GM12878 (cell line): ENCODE measurements at regions of chr9 and their contacts with region 1.

Region 1: DNA sequence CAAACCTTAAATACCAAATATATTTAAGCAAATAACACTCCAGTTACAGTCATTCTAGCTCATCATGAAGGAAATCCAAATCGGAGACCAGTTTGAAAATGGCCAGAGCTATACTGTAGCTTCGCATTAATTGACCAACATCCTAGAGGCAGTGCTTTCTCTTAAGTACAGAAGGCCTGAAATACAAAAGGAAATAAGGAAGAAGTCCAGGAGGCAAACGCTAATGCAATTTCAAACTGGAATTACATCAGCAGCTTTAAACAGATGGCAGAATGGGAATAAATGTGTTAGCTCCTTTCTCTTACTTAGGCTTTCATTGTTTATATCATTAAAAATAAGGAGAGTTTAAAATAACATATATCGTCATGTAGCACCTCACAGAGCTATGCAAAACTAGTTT is 197.0 kb downstream of the SEC61B start:
- DNase-seq: no peak
- ATAC-seq: no peak
- H3K4me3 ChIP-seq: no peak overlapping the region
- H3K27ac ChIP-seq: no peak overlapping the region
- H3K4me1 ChIP-seq: peaks cover 4% of the 10 kb centered on the region
- H3K27me3 ChIP-seq: no peaks in the 10 kb centered on the region
- CTCF ChIP-seq: no peak
- EP300 ChIP-seq: no peak
- POLR2A ChIP-seq: no peak
- RAD21 ChIP-seq: no peak

Region 2: GRCh38 chr9:99433555-99433954 is 14.5 kb after region 1 on chr9:
- CTCF ChIA-PET with region 1: interaction called, 4 read pairs
- POLR2A ChIA-PET with region 1: no interaction called
- RAD21 ChIA-PET with region 1: no interaction called
- SMC1A ChIA-PET with region 1: interaction called, 10 read pairs
- in situ Hi-C with region 1: no loop called
- intact Hi-C with region 1: no loop called
- DNase-seq: peak; percentile 49
- ATAC-seq: peak; percentile 100
- H3K4me3 ChIP-seq: no peak overlapping the region
- H3K27ac ChIP-seq: peak overlapping the region; percentile 35
- H3K4me1 ChIP-seq: peaks cover 14% of the 10 kb centered on the region
- H3K27me3 ChIP-seq: no peaks in the 10 kb centered on the region
- CTCF ChIP-seq: no peak
- EP300 ChIP-seq: peak; percentile 54 to 87; a peak in 2 of 4 replicates
- POLR2A ChIP-seq: peak; percentile 47; the same call in 1 of the 2 replicates
- RAD21 ChIP-seq: peak; percentile 2; the same call in 1 of the 2 replicates

Region 3: DNA sequence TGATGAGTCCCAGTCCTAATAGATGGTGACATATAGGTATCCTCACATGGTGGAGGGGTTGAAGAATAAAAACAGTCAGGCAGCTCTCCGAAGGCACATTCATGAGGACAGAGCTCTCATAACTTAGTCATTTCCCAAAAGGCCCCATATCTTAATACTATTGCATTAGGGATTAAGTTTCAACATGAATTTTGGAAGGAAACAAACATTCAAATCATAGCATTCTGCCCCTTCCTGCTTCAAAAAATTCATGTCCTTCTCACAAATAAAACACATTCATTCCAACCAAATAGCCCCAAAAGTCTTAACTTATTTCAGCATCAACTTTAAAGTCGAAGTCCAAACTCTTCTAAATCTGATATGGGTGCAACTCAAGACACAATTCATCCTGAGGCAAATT is 125.5 kb after region 1 on chr9:
- CTCF ChIA-PET with region 1: no interaction called
- POLR2A ChIA-PET with region 1: no interaction called
- RAD21 ChIA-PET with region 1: no interaction called
- SMC1A ChIA-PET with region 1: no interaction called
- in situ Hi-C with region 1: no loop called
- intact Hi-C with region 1: no loop called
- DNase-seq: no peak
- ATAC-seq: no peak
- H3K4me3 ChIP-seq: no peak overlapping the region
- H3K27ac ChIP-seq: no peak overlapping the region
- H3K4me1 ChIP-seq: no peaks in the 10 kb centered on the region
- H3K27me3 ChIP-seq: no peaks in the 10 kb centered on the region
- CTCF ChIP-seq: no peak
- EP300 ChIP-seq: no peak
- POLR2A ChIP-seq: no peak
- RAD21 ChIP-seq: no peak